ENCODE measurements at regions of chr1 and their contacts with region 1.

Region 1: DNA sequence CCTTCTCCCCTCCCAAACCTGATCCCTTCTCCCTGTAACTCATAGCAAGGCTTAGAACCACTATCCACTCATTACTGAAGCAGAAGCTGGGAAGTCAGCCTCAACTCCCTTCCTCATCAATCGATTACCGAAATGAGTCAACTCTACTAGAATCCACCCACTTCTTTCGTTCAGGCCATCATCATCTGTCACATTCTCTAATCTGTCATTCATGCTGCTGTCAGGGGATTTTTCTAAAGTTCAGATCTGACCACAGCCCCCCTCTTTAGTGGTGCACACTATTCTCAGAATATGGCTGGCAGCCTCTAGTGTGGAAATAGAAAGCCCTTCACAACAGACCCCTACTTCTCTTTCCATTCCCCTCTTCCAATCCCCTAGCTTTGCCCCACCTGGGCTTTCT is 5.1 kb downstream of the NT5C1A start:
- DNase-seq: no peak
- ATAC-seq: no peak
- H3K4me3 ChIP-seq: no peak overlapping the region
- H3K27ac ChIP-seq: no peak overlapping the region
- H3K4me1 ChIP-seq: peaks cover 2% of the 10 kb centered on the region
- H3K27me3 ChIP-seq: no peaks in the 10 kb centered on the region

Region 2: GRCh38 chr1:39711104-39711965 is 44.6 kb after region 1 on chr1:
- intact Hi-C with region 1: loop called in 1 of 4 experiments (anchors 10 kb)
- DNase-seq: no peak
- ATAC-seq: peak in 1 of 2 donors; percentile 73
- H3K4me3 ChIP-seq: no peak overlapping the region
- H3K27ac ChIP-seq: no peak overlapping the region
- H3K4me1 ChIP-seq: no peaks in the 10 kb centered on the region
- H3K27me3 ChIP-seq: no peaks in the 10 kb centered on the region

Region 3: GRCh38 chr1:39776400-39776713 is 109.6 kb after region 1 on chr1:
- intact Hi-C with region 1: no loop called
- DNase-seq: no peak
- ATAC-seq: no peak
- H3K4me3 ChIP-seq: no peak overlapping the region
- H3K27ac ChIP-seq: no peak overlapping the region
- H3K4me1 ChIP-seq: no peaks in the 10 kb centered on the region
- H3K27me3 ChIP-seq: no peaks in the 10 kb centered on the region

Measured in right cardiac atrium (tissue), 5 donors.